ENCODE measurements at regions of chr22 and their contacts with region 1.

Region 1: GRCh38 chr22:42283278-42284201 is 13.1 kb upstream of the TCF20 start:
- DNase-seq: peak in 9 of 14 experiments; percentile 30 to 70 (median 54)
- ATAC-seq: peak; percentile 64
- H3K4me3 ChIP-seq: peak overlapping the region; percentile 45
- H3K4me3 Mint-ChIP-seq: peak overlapping the region; percentile 76
- H3K27ac ChIP-seq: no peak overlapping the region
- H3K27ac Mint-ChIP-seq: peak overlapping the region; percentile 82
- H3K4me1 ChIP-seq: peaks cover 47% of the 10 kb centered on the region
- H3K4me1 Mint-ChIP-seq: peaks cover 39% of the 10 kb centered on the region
- H3K27me3 ChIP-seq: no peaks in the 10 kb centered on the region
- H3K27me3 Mint-ChIP-seq: no peaks in the 10 kb centered on the region
- CTCF ChIP-seq: no peak

Region 2: GRCh38 chr22:42296381-42296853 is 12.9 kb after region 1 on chr22:
- CTCF ChIA-PET with region 1: no interaction called
- POLR2A ChIA-PET with region 1: interaction called, 5 read pairs
- intact Hi-C with region 1: loop called in 1 of 2 experiments (anchors 2 kb)
- DNase-seq: peak in 7 of 14 experiments; percentile 10 to 55 (median 18)
- ATAC-seq: no peak
- H3K4me3 ChIP-seq: no peak overlapping the region
- H3K4me3 Mint-ChIP-seq: no peak overlapping the region
- H3K27ac ChIP-seq: peak overlapping the region; percentile 15 to 30
- H3K27ac Mint-ChIP-seq: peak overlapping the region; percentile 90
- H3K4me1 ChIP-seq: peaks cover 83% of the 10 kb centered on the region
- H3K4me1 Mint-ChIP-seq: peaks cover 85% of the 10 kb centered on the region
- H3K27me3 ChIP-seq: no peaks in the 10 kb centered on the region
- H3K27me3 Mint-ChIP-seq: no peaks in the 10 kb centered on the region
- CTCF ChIP-seq: peak; percentile 18